WTC11 (cell line): ENCODE measurements at regions of chr6 and their contacts with region 1.

Region 1: GRCh38 chr6:2988426-2989331 is 11.0 kb upstream of the NQO2 start:
- DNase-seq: peak; percentile 91
- ATAC-seq: peak; percentile 74
- H3K4me3 Mint-ChIP-seq: peak overlapping the region; percentile 93
- H3K27ac Mint-ChIP-seq: peak overlapping the region; percentile 100
- H3K4me1 Mint-ChIP-seq: peaks cover 54% of the 10 kb centered on the region
- H3K27me3 Mint-ChIP-seq: no peaks in the 10 kb centered on the region
- CTCF ChIP-seq: peak; percentile 43; the same call in 1 of the 2 replicates

Region 2: DNA sequence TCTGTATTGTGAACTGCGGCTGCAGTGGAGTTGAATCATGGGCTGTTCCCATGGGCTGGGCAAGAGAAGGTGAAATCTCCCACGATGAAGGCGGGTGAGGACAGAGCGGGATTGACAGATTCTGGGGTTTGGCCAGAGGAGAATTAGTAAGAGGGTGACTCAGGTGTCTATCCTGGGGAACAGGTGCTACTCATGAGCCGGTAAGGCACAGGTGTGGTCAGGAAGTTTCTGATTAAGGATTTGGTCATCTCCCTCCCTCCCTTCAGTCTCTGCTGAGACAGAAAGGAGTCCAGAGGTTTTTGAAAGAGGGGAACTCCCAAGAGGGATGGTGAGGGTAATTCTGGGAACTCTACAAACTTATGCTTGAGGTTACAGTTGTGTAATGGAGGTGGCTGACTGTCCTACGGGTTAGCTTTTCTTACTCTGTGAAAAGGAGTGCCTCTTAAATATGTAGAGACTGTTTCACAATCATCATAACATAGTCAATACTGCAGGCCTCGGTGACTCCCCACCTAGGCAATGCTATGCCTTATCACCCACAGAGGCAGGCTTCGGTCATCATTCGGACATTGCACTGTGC is 178.5 kb before region 1 on chr6:
- CTCF ChIA-PET with region 1: no interaction called
- POLR2A ChIA-PET with region 1: no interaction called
- DNase-seq: no peak
- ATAC-seq: no peak
- H3K4me3 Mint-ChIP-seq: no peak overlapping the region
- H3K27ac Mint-ChIP-seq: no peak overlapping the region
- H3K4me1 Mint-ChIP-seq: no peaks in the 10 kb centered on the region
- H3K27me3 Mint-ChIP-seq: no peaks in the 10 kb centered on the region
- CTCF ChIP-seq: no peak

Region 3: DNA sequence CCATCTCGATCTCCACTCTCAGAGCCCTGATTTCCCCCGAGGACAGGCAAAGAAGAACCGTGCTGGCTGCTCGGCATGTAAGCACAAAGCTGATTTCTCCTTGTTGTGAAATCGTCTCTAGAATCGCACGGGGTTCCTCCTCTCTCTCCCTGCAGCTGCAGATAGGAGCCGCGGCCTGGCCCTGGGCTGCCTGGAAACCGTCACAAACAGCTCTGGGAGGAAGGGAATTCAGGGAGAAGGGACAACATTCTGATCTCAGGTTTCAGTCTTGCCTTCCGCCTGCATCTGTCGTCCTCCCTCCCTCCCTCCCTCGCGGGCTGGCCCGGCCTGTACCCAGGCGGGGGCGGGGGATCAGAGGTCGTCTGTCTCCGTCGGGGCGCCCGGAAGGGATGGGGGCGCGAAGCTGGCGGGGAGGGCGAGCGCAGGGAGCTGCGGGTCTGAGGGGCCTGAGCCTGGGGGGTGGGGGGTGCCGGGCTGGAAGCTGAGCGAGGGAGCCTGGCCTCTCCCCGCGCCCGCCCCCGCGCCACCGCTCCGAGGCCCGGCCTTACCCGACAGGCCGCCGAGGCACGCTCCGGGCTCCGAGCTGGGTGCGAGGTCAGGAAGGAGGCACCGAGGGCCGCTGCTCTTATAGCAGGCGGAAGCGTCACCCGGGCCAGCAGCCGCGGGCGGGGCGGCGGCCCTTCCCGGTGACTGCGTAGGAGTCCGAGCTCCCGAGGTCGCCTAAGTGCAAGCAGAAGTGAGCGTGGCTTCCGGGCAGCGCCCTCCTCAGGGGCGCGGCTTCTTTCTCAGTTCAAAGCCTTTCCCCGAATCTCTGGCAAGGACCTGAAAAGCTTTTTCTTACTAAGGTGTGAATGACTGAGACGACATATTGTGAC is 147.2 kb before region 1 on chr6 and contains the start of gene SERPINB1:
- CTCF ChIA-PET with region 1: interaction called, 35 read pairs
- POLR2A ChIA-PET with region 1: interaction called, 12 read pairs
- DNase-seq: peak; percentile 87
- ATAC-seq: peak; percentile 92
- H3K4me3 Mint-ChIP-seq: peak within 1 kb of the TSS; percentile 91
- H3K27ac Mint-ChIP-seq: peak within 1 kb of the TSS; percentile 100
- H3K4me1 Mint-ChIP-seq: peaks cover 37% of the 10 kb centered on the region
- H3K27me3 Mint-ChIP-seq: no peaks in the 10 kb centered on the region; the same call in 1 of the 2 replicates
- CTCF ChIP-seq: no peak
- total RNA-seq, gene SERPINB1: 14.8 to 21.1 TPM (median 16.9 TPM) in 3 replicates

Region 4: DNA sequence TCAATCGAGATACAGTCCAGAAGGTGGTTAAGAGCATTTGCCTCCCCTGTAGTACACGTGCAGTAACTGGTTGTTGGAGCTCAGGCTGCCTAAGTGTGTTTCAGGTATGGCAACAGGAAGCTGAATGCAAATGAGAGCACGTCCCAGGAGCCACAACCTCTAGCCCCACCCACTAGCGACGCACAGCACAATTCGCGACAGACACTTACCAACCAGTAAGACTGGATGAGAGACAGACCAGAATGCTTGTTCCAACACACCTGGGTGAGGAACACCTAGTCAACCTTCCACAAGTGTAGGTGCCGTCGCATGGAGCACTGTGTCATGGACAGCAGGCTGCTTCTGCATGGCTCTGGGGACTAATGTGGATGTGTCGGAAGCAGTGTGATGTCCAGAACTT is 139.8 kb before region 1 on chr6:
- CTCF ChIA-PET with region 1: interaction called, 35 read pairs
- POLR2A ChIA-PET with region 1: interaction called, 4 read pairs
- DNase-seq: peak; percentile 63
- ATAC-seq: peak; percentile 82
- H3K4me3 Mint-ChIP-seq: 0 out of 2 replicates have a peak overlapping the region, but pooled peaks have one; percentile 0
- H3K27ac Mint-ChIP-seq: peak overlapping the region; percentile 88
- H3K4me1 Mint-ChIP-seq: peaks cover 37% of the 10 kb centered on the region
- H3K27me3 Mint-ChIP-seq: no peaks in the 10 kb centered on the region
- CTCF ChIP-seq: no peak

Region 5: GRCh38 chr6:2931970-2932748 is 56.5 kb before region 1 on chr6:
- CTCF ChIA-PET with region 1: interaction called, 19 read pairs
- POLR2A ChIA-PET with region 1: interaction called, 3 read pairs
- DNase-seq: peak; percentile 95
- ATAC-seq: peak; percentile 93
- H3K4me3 Mint-ChIP-seq: no peak overlapping the region
- H3K27ac Mint-ChIP-seq: peak overlapping the region; percentile 92; the same call in 1 of the 2 replicates
- H3K4me1 Mint-ChIP-seq: peaks cover 50% of the 10 kb centered on the region
- H3K27me3 Mint-ChIP-seq: no peaks in the 10 kb centered on the region
- CTCF ChIP-seq: peak; percentile 88

Region 6: GRCh38 chr6:2999618-3000557 is 11.2 kb after region 1 on chr6 and contains the start of gene NQO2:
- CTCF ChIA-PET with region 1: interaction called, 15 read pairs
- POLR2A ChIA-PET with region 1: interaction called, 21 read pairs
- DNase-seq: peak; percentile 97
- ATAC-seq: peak; percentile 88
- H3K4me3 Mint-ChIP-seq: peak within 1 kb of the TSS; percentile 90
- H3K27ac Mint-ChIP-seq: peak within 1 kb of the TSS; percentile 77
- H3K4me1 Mint-ChIP-seq: peaks cover 29% of the 10 kb centered on the region
- H3K27me3 Mint-ChIP-seq: no peaks in the 10 kb centered on the region; the same call in 1 of the 2 replicates
- CTCF ChIP-seq: no peak
- total RNA-seq, gene NQO2: 119 to 152 TPM (median 150 TPM) in 3 replicates

Region 7: DNA sequence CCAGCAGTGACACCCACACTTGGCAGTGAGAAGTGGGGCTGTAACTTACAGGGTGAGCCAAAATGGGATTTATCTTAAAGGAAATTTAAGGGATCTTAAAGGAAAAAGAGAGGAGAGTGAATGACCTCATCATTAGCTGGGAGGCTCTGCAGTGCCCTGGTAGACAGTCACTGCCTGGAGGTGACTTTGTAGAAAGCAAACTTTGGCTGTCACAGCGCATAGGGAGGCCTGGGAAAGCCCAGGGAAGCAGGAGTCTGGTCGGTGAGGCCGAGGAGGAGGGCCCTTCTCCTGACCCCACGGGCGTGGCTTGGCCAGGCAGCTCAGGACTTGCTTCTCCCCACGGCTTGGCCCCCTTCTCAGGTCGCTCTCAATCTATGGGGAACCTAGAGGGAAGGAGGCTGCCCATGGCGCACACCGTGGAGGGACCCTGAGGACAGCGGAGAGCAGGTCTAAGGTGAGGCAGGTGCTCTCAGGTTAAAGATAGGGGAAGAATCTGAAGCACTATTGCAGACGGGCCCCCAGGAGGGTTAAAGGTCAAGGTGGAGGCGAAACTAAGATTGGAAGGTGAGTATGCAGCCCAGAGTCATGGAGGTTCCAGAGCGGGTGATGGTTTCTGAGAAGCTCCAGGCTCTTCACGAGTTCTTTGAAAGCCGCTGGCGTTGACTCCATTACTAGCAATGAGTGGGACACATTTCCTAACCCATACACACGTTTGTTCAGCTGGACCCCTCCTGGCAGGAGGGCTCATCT is 64.0 kb after region 1 on chr6:
- CTCF ChIA-PET with region 1: interaction called, 4 read pairs
- POLR2A ChIA-PET with region 1: interaction called, 14 read pairs
- DNase-seq: no peak
- ATAC-seq: no peak
- H3K4me3 Mint-ChIP-seq: peak overlapping the region; percentile 83
- H3K27ac Mint-ChIP-seq: no peak overlapping the region
- H3K4me1 Mint-ChIP-seq: peaks cover 33% of the 10 kb centered on the region
- H3K27me3 Mint-ChIP-seq: peaks cover 16% of the 10 kb centered on the region
- CTCF ChIP-seq: no peak

Region 8: DNA sequence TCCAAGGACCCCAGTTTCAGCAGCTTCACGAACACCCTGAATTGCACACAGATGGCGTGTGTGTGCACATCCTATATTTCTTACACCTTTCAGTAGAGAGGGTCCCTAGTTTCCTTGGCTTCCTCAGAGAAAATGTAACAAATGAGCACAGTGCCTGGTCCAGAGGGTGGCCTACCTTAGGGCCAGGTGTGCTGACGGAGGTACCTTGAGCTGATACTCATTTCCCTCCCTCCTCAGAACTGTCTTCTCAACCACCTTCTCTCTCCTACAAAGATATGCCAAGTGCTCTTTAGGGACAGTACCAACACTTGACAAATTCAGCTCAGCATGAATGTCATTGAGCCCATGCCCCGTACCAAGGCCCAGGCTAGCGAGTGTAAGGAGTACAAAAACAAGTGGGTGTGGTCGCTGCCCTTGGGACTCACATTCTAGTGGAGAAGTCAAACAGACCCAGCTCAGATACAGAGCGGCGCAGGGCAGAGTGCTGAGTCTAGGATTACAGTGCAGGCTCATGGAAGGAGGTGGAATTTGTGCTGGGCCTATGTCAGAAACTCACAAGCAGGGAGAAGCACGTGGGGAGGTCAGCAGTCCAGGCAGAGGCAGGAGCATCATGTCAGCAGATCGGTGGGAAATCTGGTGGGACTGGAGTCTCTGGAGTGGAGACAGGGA is 120.2 kb after region 1 on chr6:
- CTCF ChIA-PET with region 1: no interaction called
- POLR2A ChIA-PET with region 1: no interaction called
- DNase-seq: no peak
- ATAC-seq: no peak
- H3K4me3 Mint-ChIP-seq: no peak overlapping the region
- H3K27ac Mint-ChIP-seq: peak overlapping the region; percentile 89
- H3K4me1 Mint-ChIP-seq: no peaks in the 10 kb centered on the region
- H3K27me3 Mint-ChIP-seq: no peaks in the 10 kb centered on the region
- CTCF ChIP-seq: no peak

Region 9: DNA sequence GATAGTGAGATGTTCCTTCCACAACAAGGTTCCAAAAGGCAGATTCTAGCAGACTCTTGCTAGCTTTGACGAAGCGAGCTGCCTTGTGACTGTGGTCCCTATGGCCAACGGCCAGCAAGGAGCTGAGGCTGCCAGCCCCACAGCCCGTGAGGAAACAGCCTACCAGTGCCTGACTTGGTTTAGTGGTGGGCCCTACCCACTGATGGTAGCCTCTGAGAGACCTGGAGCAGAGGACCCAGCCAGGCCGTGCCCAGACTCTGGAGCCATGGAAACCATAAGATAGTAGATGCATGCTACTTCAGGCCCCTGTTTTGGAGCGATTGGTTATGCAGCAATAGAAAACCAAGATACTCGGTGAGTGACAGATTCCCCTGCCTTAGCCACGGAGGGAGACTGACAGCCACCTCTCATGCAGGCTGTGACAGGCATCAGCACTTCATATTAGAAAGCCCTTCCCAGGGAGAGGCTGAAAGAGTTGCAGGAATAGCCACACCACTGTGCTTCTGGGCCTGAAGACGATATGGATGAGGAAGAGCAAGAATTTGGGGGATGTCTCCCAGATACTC is 289.3 kb after region 1 on chr6:
- CTCF ChIA-PET with region 1: no interaction called
- POLR2A ChIA-PET with region 1: no interaction called
- DNase-seq: peak; percentile 7
- ATAC-seq: no peak
- H3K4me3 Mint-ChIP-seq: no peak overlapping the region
- H3K27ac Mint-ChIP-seq: no peak overlapping the region; the same call in 1 of the 2 replicates
- H3K4me1 Mint-ChIP-seq: peaks cover 26% of the 10 kb centered on the region
- H3K27me3 Mint-ChIP-seq: no peaks in the 10 kb centered on the region
- CTCF ChIP-seq: no peak